AG04450 (cell line): ENCODE measurements at regions of chr10 and their contacts with region 1.

Region 1: GRCh38 chr10:84456126-84456525 is 127.7 kb downstream of the CCSER2 start:
- DNase-seq: no peak
- H3K4me3 ChIP-seq: no peak overlapping the region
- H3K27ac ChIP-seq: no peak overlapping the region
- H3K27me3 ChIP-seq: no peaks in the 10 kb centered on the region
- CTCF ChIP-seq: no peak

Region 2: DNA sequence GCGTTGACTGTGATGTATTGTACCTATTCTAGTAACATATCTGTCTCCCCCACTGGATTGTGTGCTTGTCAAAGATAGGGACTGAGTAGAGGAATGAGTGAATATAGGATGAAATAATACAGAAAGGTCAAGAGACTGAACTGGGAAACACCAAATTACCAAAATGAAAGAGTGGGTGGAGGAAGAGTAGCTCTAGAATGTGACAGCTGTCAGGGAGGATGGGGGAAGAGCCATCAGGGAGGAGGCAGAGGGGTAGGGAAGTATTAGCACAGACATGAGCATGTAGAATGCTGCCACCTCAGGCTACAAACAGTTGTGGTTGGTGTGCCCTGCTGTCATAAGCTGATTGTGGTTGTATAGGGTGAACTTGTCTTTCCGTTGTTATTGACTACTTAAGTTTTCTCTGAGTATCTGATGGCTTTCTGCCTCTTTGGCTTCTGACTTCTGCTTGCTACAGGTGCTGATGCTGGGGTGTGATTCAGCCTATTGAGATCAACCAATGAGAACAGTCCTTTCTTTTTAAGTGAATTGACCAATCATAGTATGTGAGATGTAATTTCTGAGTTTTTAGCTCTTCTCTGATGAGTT is 122.2 kb before region 1 on chr10:
- CTCF ChIA-PET with region 1: no interaction called
- POLR2A ChIA-PET with region 1: no interaction called
- DNase-seq: no peak
- H3K4me3 ChIP-seq: no peak overlapping the region
- H3K27ac ChIP-seq: no peak overlapping the region
- H3K27me3 ChIP-seq: no peaks in the 10 kb centered on the region
- CTCF ChIP-seq: no peak

Region 3: GRCh38 chr10:84440781-84441180 is 15.3 kb before region 1 on chr10:
- CTCF ChIA-PET with region 1: no interaction called
- POLR2A ChIA-PET with region 1: no interaction called
- DNase-seq: no peak
- H3K4me3 ChIP-seq: no peak overlapping the region
- H3K27ac ChIP-seq: no peak overlapping the region
- H3K27me3 ChIP-seq: no peaks in the 10 kb centered on the region
- CTCF ChIP-seq: no peak

Region 4: DNA sequence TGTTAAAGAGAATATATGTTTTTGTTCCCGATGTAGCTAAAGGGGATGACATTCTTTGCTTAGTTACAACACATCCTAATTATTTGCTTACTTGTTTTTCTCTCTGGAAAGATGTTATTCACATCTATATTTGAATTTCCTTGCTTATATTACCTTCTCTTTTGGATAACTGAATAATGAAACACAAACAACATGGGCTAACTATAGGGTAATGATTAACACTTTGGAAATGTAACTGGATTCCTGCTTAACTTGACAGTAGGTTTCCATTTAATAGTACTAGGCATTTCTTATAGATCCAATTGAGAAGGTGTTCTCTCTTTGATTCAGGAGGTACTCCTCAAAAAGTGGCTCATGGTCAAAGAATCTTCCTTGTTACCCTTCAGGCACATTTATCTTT is 13.3 kb after region 1 on chr10:
- CTCF ChIA-PET with region 1: no interaction called
- POLR2A ChIA-PET with region 1: interaction called, 10 read pairs
- DNase-seq: no peak
- H3K4me3 ChIP-seq: no peak overlapping the region
- H3K27ac ChIP-seq: no peak overlapping the region
- H3K27me3 ChIP-seq: no peaks in the 10 kb centered on the region
- CTCF ChIP-seq: no peak